ENCODE measurements at regions of chr10 and their contacts with region 1.

Region 1: DNA sequence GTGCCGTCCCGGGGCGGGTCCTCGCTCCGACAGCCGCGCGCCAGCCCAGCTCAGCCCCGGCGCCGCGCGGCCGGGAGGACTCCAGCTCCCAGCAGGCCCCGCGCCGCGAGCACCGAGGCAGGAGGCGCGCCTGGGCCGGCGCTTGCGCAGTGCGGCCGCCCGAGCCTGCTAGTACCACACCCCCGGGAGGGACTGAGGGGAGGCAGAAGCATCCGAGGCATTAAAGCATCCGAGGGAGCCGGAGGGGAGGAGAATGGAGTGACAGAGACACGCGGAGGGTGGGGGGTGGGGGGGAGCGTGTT is at the start of gene GRK5:
- DNase-seq: peak; percentile 99
- H3K4me3 Mint-ChIP-seq: peak within 1 kb of the TSS; percentile 92
- H3K27ac Mint-ChIP-seq: peak within 1 kb of the TSS; percentile 98
- H3K4me1 Mint-ChIP-seq: peaks cover 38% of the 10 kb centered on the region
- H3K27me3 Mint-ChIP-seq: no peaks in the 10 kb centered on the region
- total RNA-seq, gene GRK5: 25.6 and 27.3 TPM in 2 replicates

Region 2: DNA sequence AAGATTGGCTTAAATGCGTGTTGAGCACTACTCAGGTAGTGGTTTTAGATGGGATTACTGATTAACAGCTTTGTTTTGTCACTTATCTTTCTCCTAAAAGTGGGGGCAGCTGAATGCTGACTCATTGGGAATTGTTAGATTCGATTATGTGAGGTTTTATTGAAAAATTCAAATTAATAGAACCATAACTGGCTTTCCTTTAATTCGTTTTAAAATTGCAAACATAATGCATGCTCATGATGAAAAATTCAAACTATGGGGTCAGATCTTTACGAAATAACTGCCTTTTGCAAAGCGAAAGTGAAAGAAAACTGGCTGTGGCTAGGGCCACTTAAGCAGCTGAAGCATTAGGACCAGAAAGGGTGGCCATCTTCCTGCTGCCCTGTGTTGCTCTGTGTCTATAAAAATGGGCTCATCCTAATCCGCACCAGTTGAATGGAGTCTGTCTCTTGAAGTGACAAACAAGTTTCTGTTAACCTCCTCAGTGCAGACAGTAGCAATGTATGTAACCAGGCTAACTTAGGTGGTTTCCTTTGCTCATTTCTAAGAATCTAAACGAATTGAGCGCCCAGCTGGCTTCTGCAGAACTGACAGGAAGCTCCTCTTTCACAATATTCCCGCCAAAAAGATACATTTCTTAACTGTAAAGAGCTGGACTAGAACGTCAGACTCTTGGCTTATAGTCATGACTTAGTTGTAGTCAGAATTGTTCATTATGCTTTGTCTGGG is 75.6 kb before region 1 on chr10:
- intact Hi-C with region 1: loop called (anchors 2 kb)
- DNase-seq: peak; percentile 89
- H3K4me3 Mint-ChIP-seq: peak overlapping the region; percentile 83
- H3K27ac Mint-ChIP-seq: peak overlapping the region; percentile 95
- H3K4me1 Mint-ChIP-seq: peaks cover 52% of the 10 kb centered on the region
- H3K27me3 Mint-ChIP-seq: no peaks in the 10 kb centered on the region

Region 3: GRCh38 chr10:119222537-119222936 is 15.2 kb after region 1 on chr10:
- intact Hi-C with region 1: loop called (anchors 1 kb)
- DNase-seq: no peak
- H3K4me3 Mint-ChIP-seq: no peak overlapping the region
- H3K27ac Mint-ChIP-seq: peak overlapping the region; percentile 32
- H3K4me1 Mint-ChIP-seq: peaks cover 28% of the 10 kb centered on the region
- H3K27me3 Mint-ChIP-seq: no peaks in the 10 kb centered on the region

Region 4: DNA sequence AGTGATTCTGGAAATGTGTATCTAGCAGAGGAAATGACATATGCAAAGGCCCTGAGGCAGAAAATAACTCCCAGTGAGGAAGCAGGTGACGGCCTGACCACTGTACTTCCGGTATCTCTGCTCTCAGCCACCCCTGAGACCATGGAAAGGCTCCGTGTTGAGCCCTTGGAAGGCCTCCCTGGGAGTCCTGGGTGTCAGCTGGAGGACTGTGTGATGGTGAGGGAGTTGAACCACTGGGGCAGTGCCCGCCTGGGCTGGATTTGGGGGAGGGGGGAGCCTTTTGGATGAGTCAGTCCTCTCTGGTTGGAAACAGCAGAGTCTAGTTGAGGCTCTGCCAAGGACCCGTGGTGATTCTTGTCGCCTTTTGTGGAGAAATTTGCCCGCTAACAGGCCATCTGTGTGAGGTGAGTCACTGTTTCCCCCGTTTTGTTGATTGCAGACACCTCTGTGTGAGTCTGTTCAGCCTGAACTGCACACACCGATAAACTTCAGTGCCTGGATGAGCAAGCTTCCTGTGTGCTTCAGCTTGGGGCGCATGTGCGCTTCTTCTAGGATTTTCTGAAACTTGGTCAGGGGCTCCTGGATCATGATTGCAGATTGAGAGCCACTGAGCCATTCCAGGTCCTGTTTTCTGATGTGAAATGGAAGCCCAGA is 98.7 kb after region 1 on chr10:
- intact Hi-C with region 1: loop called (anchors 1 kb)
- DNase-seq: peak; percentile 95
- H3K4me3 Mint-ChIP-seq: peak overlapping the region; percentile 81
- H3K27ac Mint-ChIP-seq: peak overlapping the region; percentile 100
- H3K4me1 Mint-ChIP-seq: peaks cover 79% of the 10 kb centered on the region
- H3K27me3 Mint-ChIP-seq: peaks cover 2% of the 10 kb centered on the region

Region 5: GRCh38 chr10:119542988-119543813 is 335.9 kb after region 1 on chr10:
- intact Hi-C with region 1: loop called (anchors 2 kb)
- DNase-seq: peak; percentile 89
- H3K4me3 Mint-ChIP-seq: peak overlapping the region; percentile 79
- H3K27ac Mint-ChIP-seq: peak overlapping the region; percentile 91
- H3K4me1 Mint-ChIP-seq: peaks cover 35% of the 10 kb centered on the region
- H3K27me3 Mint-ChIP-seq: peaks cover 20% of the 10 kb centered on the region

Region 6: GRCh38 chr10:119705434-119705831 is 498.1 kb after region 1 on chr10:
- intact Hi-C with region 1: loop called (anchors 5 kb)
- DNase-seq: peak; percentile 72
- H3K4me3 Mint-ChIP-seq: peak overlapping the region; percentile 75
- H3K27ac Mint-ChIP-seq: peak overlapping the region; percentile 99
- H3K4me1 Mint-ChIP-seq: peaks cover 56% of the 10 kb centered on the region
- H3K27me3 Mint-ChIP-seq: no peaks in the 10 kb centered on the region